Right ventricle myocardium inferior (tissue), 1 donor: ENCODE measurements at regions of chr19 and their contacts with region 1.

Region 1: GRCh38 chr19:796692-797527 is at the start of gene PTBP1:
- DNase-seq: peak; percentile 100
- ATAC-seq: peak; percentile 92
- total RNA-seq, gene PTBP1: 67.6 TPM

Region 2: DNA sequence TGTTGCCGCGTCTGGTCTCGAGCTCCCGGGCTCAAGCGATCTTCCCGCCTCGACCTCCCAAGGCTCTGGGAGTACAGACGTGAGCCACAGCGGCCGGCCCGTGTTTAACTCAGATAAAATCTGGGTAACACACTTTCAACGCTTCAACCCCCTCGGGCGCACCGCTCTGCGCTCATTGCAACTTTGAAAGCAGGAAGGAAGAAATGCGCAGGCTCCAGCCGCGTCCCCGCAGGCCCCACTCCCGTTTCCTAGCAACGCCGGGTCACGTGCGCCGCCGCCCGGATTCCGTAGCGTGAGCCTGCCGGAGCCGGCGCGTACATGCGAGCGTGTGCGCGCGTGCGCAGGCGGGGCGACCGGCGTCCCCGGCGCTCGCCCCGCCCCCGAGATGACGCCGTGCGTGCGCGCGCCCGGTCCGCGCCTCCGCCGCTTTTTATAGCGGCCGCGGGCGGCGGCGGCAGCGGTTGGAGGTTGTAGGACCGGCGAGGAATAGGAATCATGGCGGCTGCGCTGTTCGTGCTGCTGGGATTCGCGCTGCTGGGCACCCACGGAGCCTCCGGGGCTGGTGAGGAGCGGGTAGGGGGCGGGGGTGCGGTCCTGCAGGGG is 224.7 kb before region 1 on chr19 and contains the start of gene BSG:
- intact Hi-C with region 1: loop called (anchors 10 kb)
- DNase-seq: peak; percentile 99
- ATAC-seq: peak; percentile 77
- total RNA-seq, gene BSG: 1,651 TPM

Region 3: GRCh38 chr19:782185-782877 is 14.6 kb before region 1 on chr19:
- intact Hi-C with region 1: loop called (anchors 2 kb)
- DNase-seq: peak; percentile 67
- ATAC-seq: peak; percentile 20

Region 4: DNA sequence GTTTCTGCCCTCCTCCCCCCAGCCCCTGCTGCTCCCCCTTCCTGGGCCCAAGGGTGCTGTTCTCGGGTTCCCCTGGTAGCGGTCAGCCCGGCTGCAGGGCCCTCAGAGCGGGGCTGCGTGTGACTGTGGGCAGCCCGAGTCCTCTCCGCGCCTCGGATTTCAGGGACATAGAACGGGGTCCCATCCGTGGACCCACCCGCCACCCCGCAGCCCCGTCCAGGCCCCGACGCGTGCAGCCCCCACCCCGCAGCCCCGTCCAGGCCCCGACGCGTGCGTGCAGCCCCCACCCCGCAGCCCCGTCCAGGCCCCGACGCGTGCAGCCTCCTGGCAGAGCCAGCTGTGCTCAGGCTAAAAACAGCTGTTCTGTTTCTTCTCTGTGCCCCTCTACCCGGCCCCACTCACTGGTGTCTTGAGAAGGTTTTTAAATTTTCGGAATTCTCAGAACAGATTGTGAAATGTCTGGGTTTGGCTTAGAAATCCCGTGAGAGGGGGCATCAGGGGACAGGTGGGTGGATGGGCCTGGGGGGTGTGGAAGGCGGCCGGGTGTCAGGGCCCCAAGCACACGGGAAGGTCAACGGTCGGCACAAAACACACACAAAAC is 38.4 kb after region 1 on chr19:
- intact Hi-C with region 1: no loop called
- DNase-seq: peak; percentile 55
- ATAC-seq: peak; percentile 26

Region 5: GRCh38 chr19:848386-848921 is 51.5 kb after region 1 on chr19:
- intact Hi-C with region 1: loop called (anchors 5 kb)
- DNase-seq: peak; percentile 73
- ATAC-seq: peak; percentile 32

Region 6: GRCh38 chr19:1103708-1104310 is 306.9 kb after region 1 on chr19 and contains the start of gene GPX4:
- intact Hi-C with region 1: loop called (anchors 5 kb)
- DNase-seq: peak; percentile 100
- ATAC-seq: peak; percentile 86
- total RNA-seq, gene GPX4: 361 TPM

Region 7: DNA sequence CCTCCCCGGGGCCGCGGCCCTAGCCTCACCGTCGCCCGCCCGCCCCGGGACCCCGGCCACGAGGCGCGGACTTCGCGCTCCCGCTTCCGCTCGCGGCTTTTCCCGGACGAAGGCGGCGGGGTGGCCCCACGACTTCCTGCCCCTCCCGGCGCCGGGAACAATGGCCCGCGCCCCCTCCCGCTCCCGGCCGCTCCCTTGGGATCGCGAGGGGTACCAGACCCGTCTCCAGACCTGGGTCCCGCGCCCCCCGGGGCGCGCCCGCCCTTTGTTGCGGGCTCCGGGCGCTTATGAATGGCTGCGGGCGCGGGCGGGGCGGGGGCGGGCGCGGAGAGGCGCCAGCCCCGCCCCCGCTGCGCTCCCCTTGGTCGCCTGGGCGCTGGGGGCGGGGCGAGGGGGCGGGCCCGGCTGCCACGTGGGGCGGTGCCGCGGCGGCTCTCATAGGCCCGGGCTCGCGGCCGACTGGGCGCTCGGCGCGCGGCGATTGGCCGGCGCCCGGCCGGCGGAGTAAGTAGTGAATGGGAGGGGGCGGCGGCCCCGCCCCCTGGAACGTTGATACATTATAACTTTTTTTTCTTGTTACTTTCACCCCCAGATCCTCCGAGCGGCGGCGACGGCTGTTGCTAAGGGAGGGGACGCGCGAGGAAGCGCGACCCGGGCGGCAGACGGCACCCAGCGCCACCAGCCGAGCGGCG is 452.5 kb after region 1 on chr19:
- intact Hi-C with region 1: loop called (anchors 10 kb)
- DNase-seq: peak; percentile 98
- ATAC-seq: peak; percentile 17